ENCODE measurements at regions of chr5 and their contacts with region 1.

Region 1: DNA sequence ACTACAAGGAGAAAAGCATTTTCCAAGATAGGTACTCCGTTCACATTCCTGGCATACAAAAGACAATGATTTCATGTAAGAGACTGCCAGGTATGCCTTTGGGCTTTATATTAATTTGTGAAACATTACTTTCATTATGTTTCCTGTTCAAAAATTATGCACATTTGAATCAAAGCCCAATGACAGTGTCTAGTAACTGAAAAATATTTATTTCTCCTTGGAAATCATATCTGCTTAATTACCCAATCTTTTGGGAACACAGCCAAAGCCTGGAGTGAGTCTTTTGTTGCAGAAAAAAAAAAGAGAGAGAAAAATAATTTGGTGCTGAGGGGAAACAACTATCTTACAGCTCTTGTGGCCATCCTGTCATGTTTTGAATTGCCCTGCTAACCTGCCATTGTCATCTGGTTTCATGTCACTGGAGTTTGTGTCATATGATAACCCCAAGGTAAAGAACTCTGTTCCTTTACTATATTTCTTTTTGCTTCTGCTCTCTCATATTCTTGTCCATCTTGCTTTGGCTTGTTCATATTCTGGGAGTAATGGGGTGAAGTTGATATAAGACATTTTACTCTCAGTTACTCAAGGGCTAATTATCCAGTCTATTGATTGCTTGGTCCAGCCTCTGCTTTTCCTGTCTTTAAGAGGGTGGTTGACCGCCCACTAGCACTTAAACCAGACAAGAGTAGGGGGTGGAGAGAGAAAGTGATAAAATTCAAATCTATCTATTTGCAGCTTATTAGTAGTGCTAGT is 238.3 kb upstream of the NUDT12 start:
- DNase-seq: no peak
- ATAC-seq: no peak
- H3K4me3 ChIP-seq: no peak overlapping the region
- H3K27ac ChIP-seq: no peak overlapping the region
- H3K4me1 ChIP-seq: no peaks in the 10 kb centered on the region
- H3K27me3 ChIP-seq: no peaks in the 10 kb centered on the region

Region 2: GRCh38 chr5:103667068-103667467 is 133.9 kb before region 1 on chr5:
- intact Hi-C with region 1: no loop called
- DNase-seq: no peak
- ATAC-seq: no peak
- H3K4me3 ChIP-seq: no peak overlapping the region
- H3K27ac ChIP-seq: no peak overlapping the region
- H3K4me1 ChIP-seq: no peaks in the 10 kb centered on the region
- H3K27me3 ChIP-seq: no peaks in the 10 kb centered on the region

Region 3: DNA sequence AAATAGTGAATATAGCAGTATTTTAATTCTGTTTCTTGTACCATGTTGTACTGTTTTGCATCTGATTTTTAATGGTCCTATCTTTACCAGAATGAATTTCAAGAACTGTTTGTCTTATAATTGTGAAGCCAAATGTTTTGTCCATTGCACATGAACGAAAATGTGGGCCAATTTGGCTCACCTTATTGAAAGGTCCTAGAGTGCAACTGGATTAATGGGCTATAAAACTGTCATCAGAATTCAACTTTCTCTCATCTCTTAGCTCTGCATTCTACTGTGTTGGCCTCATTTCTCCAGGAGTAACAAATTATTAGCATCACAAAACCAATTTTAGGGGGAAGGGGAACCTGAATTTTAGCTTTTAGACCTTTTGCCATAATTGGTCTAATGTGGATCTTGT is 58.9 kb before region 1 on chr5:
- intact Hi-C with region 1: loop called in 1 of 2 experiments (anchors 2 kb)
- DNase-seq: no peak
- ATAC-seq: no peak
- H3K4me3 ChIP-seq: no peak overlapping the region
- H3K27ac ChIP-seq: no peak overlapping the region
- H3K4me1 ChIP-seq: no peaks in the 10 kb centered on the region
- H3K27me3 ChIP-seq: no peaks in the 10 kb centered on the region

Region 4: DNA sequence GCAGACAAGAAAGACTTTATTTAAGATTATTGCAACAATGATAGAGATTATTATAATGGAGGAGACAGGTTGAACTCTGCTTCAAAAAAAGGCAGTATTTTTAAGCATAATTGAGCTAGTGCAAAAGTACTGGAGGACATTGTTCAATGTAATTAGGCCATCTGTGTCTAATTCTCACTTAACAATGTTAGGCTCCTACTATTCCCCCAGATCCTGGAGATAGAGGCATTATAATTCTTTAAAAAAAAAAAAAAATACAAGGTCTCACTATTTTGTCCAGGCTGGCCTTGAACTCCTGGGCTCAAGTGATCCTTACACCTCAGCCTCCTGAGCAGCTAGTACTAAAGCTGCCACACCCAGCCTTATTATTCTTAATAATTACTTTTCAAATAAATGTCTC is 44.9 kb before region 1 on chr5:
- intact Hi-C with region 1: no loop called
- DNase-seq: no peak
- ATAC-seq: no peak
- H3K4me3 ChIP-seq: no peak overlapping the region
- H3K27ac ChIP-seq: no peak overlapping the region
- H3K4me1 ChIP-seq: no peaks in the 10 kb centered on the region
- H3K27me3 ChIP-seq: no peaks in the 10 kb centered on the region

Region 5: GRCh38 chr5:103821361-103821760 is 20.4 kb after region 1 on chr5:
- intact Hi-C with region 1: no loop called
- DNase-seq: no peak
- ATAC-seq: no peak
- H3K4me3 ChIP-seq: no peak overlapping the region
- H3K27ac ChIP-seq: no peak overlapping the region
- H3K4me1 ChIP-seq: no peaks in the 10 kb centered on the region
- H3K27me3 ChIP-seq: no peaks in the 10 kb centered on the region

Region 6: DNA sequence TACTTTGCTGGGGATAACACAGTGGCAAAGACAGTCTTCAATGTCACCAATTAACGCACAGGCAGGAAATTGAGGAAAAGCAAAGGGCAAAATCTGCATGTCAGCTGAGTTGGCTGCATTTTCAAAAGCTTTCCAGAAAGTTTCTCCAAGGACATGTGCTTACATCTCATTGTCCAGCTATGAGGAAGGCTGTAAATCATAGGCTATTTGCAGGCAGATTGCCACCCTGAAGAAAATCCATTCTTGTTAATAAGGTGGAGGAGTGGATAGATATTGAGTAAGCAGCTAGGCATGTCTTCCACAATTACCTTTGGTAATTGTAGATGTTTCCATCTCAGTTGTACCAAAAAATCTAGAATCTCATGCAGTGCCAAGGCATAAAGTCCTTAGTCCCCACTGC is 39.7 kb after region 1 on chr5:
- intact Hi-C with region 1: no loop called
- DNase-seq: no peak
- ATAC-seq: no peak
- H3K4me3 ChIP-seq: no peak overlapping the region
- H3K27ac ChIP-seq: no peak overlapping the region
- H3K4me1 ChIP-seq: no peaks in the 10 kb centered on the region
- H3K27me3 ChIP-seq: no peaks in the 10 kb centered on the region